ENCODE measurements at regions of chr4 and their contacts with region 1.

Region 1: DNA sequence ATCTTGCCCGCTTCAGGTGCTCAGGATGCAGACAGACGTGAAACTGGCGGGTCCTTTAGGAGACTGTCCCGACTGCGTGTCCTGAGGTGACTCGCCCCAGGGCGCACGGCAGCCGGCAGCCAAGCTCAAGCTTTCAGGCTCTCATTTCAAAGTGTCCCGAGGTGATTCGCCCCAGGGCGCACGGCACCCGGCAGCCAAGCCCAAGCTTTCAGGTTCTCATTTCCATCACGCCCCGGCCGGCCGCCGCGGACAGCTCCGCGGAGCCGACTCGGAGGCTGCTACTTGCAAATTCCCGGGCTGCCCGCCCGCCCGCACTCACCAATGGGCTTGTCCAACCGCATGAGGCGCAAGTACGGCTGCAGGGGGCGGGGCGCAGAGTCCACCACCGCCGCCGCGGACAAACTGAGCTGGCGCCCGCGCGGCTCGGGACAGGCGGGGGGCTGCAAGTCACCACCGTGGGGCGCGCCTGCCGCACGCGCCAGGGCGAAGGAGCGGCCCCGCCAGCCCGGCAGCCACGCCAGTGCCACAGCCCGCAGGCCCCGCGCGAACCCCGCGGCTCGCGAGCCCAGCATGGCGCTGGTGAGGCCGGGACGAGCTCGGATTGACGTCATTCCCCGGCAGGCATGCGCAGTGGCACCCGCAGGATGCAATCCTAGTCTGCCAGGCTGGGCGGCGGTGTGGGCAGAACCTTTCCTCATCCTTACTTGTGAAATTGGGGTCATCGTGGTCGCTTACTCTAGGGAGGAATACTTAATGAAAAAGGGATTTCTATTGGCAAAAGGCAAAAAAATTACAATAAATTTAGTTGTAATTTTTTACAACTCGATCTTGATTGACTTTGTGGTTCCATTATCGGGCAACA is at the start of gene COQ2:
- DNase-seq: peak; percentile 73 to 89
- H3K4me3 ChIP-seq: peak within 1 kb of the TSS; percentile 60
- H3K27ac ChIP-seq: peak within 1 kb of the TSS; percentile 27; the same call in 1 of the 2 replicates
- H3K4me1 ChIP-seq: peaks cover 24% of the 10 kb centered on the region
- H3K27me3 ChIP-seq: no peaks in the 10 kb centered on the region
- CTCF ChIP-seq: no peak
- total RNA-seq, gene COQ2: 16.5 and 19.5 TPM in 2 replicates

Region 2: DNA sequence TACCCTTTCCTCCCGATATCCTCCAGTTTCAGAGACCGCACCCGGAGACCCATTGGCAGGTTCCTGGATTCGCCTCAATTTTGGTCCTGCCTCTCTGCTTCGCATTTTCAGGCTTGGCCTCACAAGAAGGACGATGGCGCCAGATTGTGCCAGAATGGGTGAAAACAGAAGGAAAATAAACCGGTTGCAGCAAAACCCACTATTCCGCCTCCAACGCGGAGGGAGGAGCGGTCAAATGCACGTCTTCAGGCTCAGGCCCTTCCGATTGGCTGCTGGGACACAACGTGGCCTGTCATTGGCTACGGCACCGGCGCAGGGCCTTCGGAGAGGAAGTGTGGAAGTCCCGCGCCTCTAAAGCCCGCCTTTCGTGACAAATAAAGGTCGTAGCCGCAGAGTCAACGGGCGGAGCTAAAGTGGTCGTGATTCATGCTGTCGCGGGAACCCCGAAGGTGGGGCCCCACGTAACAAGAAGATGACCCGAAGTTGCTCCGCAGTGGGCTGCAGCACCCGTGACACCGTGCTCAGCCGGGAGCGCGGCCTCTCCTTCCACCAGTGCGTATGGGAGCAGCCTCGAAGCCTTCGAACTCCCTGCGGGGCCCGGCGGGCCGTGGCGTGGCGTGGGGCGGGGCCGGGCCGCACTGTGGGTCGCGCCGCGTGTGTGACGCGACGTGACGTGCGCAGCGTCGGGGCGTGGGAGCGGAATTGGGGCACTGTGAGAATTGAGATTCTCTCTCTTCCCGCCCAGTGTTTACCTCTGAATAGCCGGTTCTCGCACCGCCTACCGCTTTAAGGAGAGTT is 383.9 kb before region 1 on chr4 and contains the start of gene THAP9:
- CTCF ChIA-PET with region 1: no interaction called
- POLR2A ChIA-PET with region 1: no interaction called
- intact Hi-C with region 1: loop called (anchors 5 kb)
- DNase-seq: peak; percentile 93 to 95
- H3K4me3 ChIP-seq: peak within 1 kb of the TSS; percentile 86
- H3K27ac ChIP-seq: peak within 1 kb of the TSS; percentile 95
- H3K4me1 ChIP-seq: peaks cover 18% of the 10 kb centered on the region
- H3K27me3 ChIP-seq: no peaks in the 10 kb centered on the region
- CTCF ChIP-seq: no peak
- total RNA-seq, gene THAP9: 3.4 and 3.5 TPM in 2 replicates

Region 3: DNA sequence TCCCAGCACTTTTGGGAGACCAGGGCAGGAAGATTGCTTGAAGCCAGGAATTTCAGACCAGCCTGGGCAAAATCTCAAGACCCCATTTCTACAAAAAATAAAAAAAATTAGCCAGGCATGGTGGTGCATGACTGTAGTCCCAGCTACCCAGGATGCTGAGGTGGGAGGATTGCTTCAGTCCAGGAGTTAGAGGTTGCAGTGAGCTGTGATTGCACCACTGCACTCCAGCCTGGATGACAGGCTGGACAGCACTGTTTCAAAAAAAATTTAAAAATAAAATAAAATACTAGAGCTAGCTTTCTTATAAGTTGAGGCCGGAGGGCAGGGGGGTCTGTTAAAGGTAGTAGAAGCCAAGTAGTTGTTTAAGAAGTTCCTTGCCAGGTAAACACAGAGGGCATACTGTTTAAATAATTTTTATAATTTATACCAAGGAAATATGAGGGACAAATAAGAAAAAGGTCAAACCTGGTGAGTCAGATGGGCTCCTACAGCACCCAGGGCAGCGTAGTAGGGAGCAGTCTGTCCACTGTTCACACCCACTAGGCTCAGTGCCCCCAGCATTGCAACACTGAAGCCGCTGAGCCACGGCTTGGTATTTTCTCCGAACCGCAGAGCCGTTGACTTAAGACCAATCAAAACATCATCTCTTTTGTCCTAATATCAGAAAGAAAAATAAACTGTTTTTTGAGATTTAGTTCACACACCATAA is 17.1 kb before region 1 on chr4:
- CTCF ChIA-PET with region 1: no interaction called
- POLR2A ChIA-PET with region 1: interaction called, 10 read pairs
- intact Hi-C with region 1: no loop called
- DNase-seq: peak; percentile 63 to 89
- H3K4me3 ChIP-seq: no peak overlapping the region
- H3K27ac ChIP-seq: peak overlapping the region; percentile 67
- H3K4me1 ChIP-seq: peaks cover 31% of the 10 kb centered on the region
- H3K27me3 ChIP-seq: no peaks in the 10 kb centered on the region
- CTCF ChIP-seq: no peak

Region 4: DNA sequence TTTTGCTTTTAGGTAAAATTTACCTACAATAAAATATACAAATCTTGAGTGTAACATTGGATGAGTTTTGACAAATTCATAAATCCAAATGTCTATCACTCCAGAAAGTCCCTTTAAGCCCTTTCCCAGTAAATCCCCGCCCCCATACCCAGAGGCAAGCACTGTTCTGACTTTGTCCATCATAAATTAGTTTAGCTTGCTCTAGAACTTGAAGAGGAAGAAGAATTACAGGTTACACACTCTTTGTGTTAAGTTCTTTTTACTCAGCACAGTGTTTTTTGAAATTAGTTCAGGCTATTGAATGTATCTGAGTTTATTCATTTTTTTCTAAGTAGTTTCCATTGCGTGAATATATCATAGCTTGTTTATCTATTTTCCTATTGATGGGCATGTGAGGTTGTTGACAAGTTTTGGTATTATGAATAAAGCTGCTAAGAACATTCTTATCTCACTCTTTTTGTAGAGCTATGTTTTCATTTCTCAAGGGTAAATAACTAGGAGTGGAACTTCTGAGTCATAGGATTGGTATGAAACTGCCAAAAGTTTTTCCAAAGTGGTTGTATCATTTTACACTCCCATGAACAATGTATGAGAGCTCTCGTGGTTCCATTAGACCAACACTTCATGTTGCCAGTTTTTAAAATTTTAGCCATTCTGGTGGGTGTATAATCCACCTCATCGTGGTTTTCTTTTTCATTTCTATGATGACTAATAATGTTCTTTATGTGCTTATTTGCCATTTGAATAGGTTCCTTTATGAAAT is 72.7 kb after region 1 on chr4:
- CTCF ChIA-PET with region 1: interaction called, 4 read pairs
- POLR2A ChIA-PET with region 1: no interaction called
- intact Hi-C with region 1: loop called (anchors 2 kb)
- DNase-seq: peak in 1 of 2 experiments; percentile 81
- H3K4me3 ChIP-seq: no peak overlapping the region
- H3K27ac ChIP-seq: peak overlapping the region; percentile 85
- H3K4me1 ChIP-seq: peaks cover 37% of the 10 kb centered on the region
- H3K27me3 ChIP-seq: no peaks in the 10 kb centered on the region
- CTCF ChIP-seq: no peak

Region 5: GRCh38 chr4:83455281-83456129 is 171.1 kb after region 1 on chr4 and contains the starts of genes HELQ and MRPS18C:
- CTCF ChIA-PET with region 1: no interaction called
- POLR2A ChIA-PET with region 1: no interaction called
- intact Hi-C with region 1: loop called (anchors 1 kb)
- DNase-seq: peak; percentile 87 to 91
- H3K4me3 ChIP-seq: peak within 1 kb of the TSS; percentile 91
- H3K27ac ChIP-seq: peak within 1 kb of the TSS; percentile 76
- H3K4me1 ChIP-seq: peaks cover 14% of the 10 kb centered on the region
- H3K27me3 ChIP-seq: no peaks in the 10 kb centered on the region
- CTCF ChIP-seq: peak; percentile 47; the same call in 1 of the 2 replicates
- total RNA-seq, gene HELQ: 7.0 and 10.6 TPM in 2 replicates
- total RNA-seq, gene MRPS18C: 18.6 and 37.8 TPM in 2 replicates

Measured in PC-9 (cell line).